Posterior vena cava (tissue), 2 donors: ENCODE measurements at regions of chr1 and their contacts with region 1.

Region 1: GRCh38 chr1:80113168-80114038 is 1106.9 kb upstream of the ADGRL4 start:
- DNase-seq: no peak

Region 2: GRCh38 chr1:80083877-80084276 is 29.5 kb before region 1 on chr1:
- intact Hi-C with region 1: loop called in 1 of 2 experiments (anchors 1 kb)
- DNase-seq: no peak

Region 3: DNA sequence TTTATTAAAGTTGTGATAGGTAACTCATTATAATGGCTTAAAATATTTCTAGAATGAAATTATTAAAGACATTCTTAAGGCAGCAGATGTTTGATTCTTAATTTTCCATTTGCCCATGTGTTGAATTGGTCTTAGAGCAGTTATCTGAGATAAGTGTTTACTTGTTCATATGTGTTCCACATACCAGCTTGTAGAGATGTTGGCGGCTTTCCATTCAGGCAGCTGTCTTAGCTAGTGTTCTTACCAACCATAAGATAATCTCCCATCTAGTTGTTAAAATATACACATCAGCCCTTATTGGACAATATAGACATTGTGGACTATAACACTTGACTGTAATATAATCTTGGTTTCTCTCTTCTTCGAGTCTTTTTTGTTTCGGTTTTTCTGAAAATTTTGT is 314.5 kb after region 1 on chr1:
- intact Hi-C with region 1: no loop called
- DNase-seq: no peak